T-cell (primary cell): ENCODE measurements at regions of chr5 and their contacts with region 1.

Region 1: DNA sequence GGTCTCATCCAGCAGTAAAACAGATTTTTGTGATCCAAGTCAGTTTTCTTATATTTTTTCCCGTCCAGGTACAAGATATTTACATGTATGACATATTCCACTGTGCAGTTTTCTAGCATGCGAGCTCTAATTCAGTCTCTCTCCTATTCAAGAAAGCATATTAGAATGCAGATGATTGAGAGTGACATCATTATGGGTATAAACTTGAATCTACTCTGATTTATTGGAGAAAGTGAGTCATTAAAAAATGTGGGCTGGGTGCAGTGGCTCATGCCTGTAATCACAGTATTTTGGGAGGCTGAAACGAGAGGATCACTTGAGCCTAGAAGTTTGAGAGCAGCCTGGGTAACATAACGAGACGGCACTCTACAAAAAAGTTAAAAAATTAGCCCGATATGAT is 6.2 kb downstream of the FER start:
- DNase-seq: no peak
- ATAC-seq: no peak
- H3K4me3 ChIP-seq: no peak overlapping the region
- H3K4me3 Mint-ChIP-seq: no peak overlapping the region
- H3K27ac ChIP-seq: no peak overlapping the region
- H3K27ac Mint-ChIP-seq: no peak overlapping the region
- H3K4me1 ChIP-seq: peaks cover 0 to 5% of the 10 kb centered on the region in 2 experiments
- H3K4me1 Mint-ChIP-seq: peaks cover 10 to 12% (median 11%) of the 10 kb centered on the region in 3 donors
- H3K27me3 ChIP-seq: no peaks in the 10 kb centered on the region
- H3K27me3 Mint-ChIP-seq: no peaks in the 10 kb centered on the region

Region 2: GRCh38 chr5:108054349-108054748 is 699.5 kb before region 1 on chr5:
- CTCF ChIA-PET with region 1: no interaction called
- POLR2A ChIA-PET with region 1: no interaction called
- DNase-seq: no peak
- ATAC-seq: no peak
- H3K4me3 ChIP-seq: no peak overlapping the region
- H3K4me3 Mint-ChIP-seq: no peak overlapping the region
- H3K27ac ChIP-seq: no peak overlapping the region
- H3K27ac Mint-ChIP-seq: no peak overlapping the region
- H3K4me1 ChIP-seq: no peaks in the 10 kb centered on the region
- H3K4me1 Mint-ChIP-seq: no peaks in the 10 kb centered on the region
- H3K27me3 ChIP-seq: no peaks in the 10 kb centered on the region
- H3K27me3 Mint-ChIP-seq: no peaks in the 10 kb centered on the region

Region 3: DNA sequence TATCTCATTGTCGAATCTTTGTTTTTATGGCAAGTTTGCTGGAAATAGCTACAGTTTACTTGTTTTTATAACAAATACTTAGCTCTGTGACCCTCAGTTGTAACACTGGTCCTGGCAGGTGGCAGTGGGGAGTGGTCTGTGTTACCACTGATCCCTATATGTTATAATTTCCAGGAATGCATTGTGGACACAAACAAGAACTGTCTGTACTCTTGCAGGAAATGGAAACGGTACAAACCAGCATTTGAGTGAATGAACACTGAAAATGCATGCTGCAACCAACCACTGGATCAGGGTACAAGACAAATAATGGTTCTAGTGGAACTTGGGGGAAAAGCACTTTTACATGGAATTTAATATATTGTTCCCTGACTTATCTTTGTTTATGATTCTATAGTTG is 722.4 kb after region 1 on chr5:
- CTCF ChIA-PET with region 1: no interaction called
- POLR2A ChIA-PET with region 1: interaction called in 1 of 2 experiments, 10 read pairs
- DNase-seq: no peak
- ATAC-seq: no peak
- H3K4me3 ChIP-seq: no peak overlapping the region
- H3K4me3 Mint-ChIP-seq: no peak overlapping the region
- H3K27ac ChIP-seq: no peak overlapping the region
- H3K27ac Mint-ChIP-seq: no peak overlapping the region
- H3K4me1 ChIP-seq: no peaks in the 10 kb centered on the region
- H3K4me1 Mint-ChIP-seq: no peaks in the 10 kb centered on the region
- H3K27me3 ChIP-seq: no peaks in the 10 kb centered on the region
- H3K27me3 Mint-ChIP-seq: peaks cover 10 to 16% of the 10 kb centered on the region in 2 donors